Left cardiac atrium (tissue), 4 donors: ENCODE measurements at regions of chr19 and their contacts with region 1.

Region 1: DNA sequence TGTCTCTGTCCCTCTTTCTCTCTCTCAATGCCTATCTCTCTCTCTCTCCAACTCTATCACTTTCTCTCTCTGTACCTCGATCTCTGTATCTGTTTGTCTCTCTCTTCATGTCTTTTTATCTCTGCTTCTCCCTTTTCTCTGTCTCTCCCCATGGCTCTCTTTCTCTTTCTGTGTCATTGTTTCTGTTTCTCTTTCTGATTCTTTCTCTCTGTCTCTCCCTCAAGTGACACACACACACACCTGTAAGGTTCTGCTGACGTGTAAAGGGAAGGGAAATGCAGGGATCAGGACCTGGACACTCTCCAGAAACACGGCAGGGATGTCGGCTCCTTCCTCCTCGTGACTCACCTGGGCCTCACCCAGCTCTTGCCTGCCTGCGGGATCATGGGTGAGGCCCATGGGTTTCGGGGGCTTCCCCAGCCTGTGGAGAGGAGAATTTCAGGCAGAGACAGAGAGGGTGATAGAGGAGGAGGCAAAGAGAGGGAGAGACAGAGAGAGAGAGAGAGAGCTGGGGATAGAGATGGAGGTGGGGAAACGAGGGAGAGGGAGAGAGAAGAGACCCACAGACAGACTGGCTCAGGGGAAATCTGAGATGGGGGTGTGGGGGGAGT is 5.4 kb upstream of the PLAUR start:
- DNase-seq: no peak
- ATAC-seq: peak; percentile 28 to 89

Region 2: GRCh38 chr19:43723588-43723987 is 48.2 kb after region 1 on chr19:
- intact Hi-C with region 1: loop called in 1 of 2 experiments (anchors 10 kb)
- DNase-seq: no peak
- ATAC-seq: no peak